PC-9 (cell line): ENCODE measurements at regions of chr3 and their contacts with region 1.

Region 1: DNA sequence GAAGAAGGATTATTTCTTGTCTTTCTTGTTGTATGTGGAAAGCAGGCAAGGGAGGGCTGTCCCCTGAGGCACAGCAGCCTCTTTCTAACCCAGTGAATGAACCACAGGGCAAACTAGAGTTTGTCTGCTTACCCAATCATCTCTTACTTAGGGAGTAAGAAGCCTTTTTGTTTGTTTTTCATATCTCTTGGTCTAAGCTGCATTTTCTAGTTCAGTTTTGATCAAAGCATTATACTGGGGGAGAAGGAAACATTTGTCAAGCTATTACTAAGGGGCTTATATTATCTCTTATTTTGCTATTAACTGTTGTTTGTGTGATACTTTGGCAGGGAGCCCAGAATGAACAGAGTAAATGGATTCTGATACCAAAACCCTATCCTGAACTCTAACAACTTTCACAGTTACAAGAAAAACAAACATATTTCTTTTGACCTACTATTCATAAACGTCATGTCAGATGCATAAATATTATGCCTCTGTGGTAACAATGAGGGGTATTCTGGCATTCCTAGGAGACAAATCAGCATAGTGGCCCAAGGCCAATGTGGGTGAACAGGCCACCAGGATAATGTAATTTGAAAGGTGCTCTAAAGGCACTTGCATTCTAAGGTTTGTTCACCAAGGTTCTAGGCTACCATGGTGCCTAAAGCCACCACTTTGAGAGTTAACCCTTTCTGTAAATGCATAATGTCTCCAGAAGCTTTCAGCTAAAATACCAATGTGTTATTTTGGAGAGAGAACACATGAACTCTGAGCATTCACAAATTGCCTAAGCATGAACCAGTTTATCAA is 271.6 kb upstream of the ZPLD1 start:
- DNase-seq: peak; percentile 84 to 100
- H3K4me3 ChIP-seq: peak overlapping the region; percentile 7; the same call in 1 of the 2 replicates
- H3K27ac ChIP-seq: peak overlapping the region; percentile 87
- H3K4me1 ChIP-seq: peaks cover 59% of the 10 kb centered on the region
- H3K27me3 ChIP-seq: no peaks in the 10 kb centered on the region
- CTCF ChIP-seq: no peak

Region 2: GRCh38 chr3:101849051-101849720 is 314.0 kb before region 1 on chr3 and contains the start of gene NFKBIZ:
- CTCF ChIA-PET with region 1: no interaction called
- POLR2A ChIA-PET with region 1: interaction called, 10 read pairs
- intact Hi-C with region 1: loop called (anchors 1 kb)
- DNase-seq: peak; percentile 91 to 99
- H3K4me3 ChIP-seq: peak within 1 kb of the TSS; percentile 88
- H3K27ac ChIP-seq: peak within 1 kb of the TSS; percentile 80
- H3K4me1 ChIP-seq: peaks cover 24% of the 10 kb centered on the region
- H3K27me3 ChIP-seq: no peaks in the 10 kb centered on the region
- CTCF ChIP-seq: no peak
- total RNA-seq, gene NFKBIZ: 44.9 and 57.7 TPM in 2 replicates

Region 3: DNA sequence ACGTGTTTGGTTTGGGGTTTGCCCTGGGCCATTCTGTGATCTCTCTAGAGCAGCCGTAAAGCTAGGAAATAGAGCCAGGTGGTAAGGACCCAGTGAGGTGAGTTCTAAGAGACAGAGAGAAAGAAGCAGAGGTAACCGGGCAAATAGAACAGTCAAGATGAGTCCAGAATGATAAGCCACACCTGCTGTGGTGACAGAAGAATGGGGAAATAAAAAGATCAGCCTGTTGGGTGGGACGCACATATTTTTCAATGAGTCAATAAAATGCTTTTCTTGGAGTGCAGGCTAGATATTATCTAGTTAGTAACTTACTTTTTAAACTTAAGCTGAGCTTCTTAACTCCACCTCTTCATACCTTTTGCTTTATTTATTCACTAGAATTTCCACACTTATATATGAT is 178.9 kb before region 1 on chr3:
- CTCF ChIA-PET with region 1: no interaction called
- POLR2A ChIA-PET with region 1: no interaction called
- intact Hi-C with region 1: loop called (anchors 1 kb)
- DNase-seq: peak; percentile 67 to 91
- H3K4me3 ChIP-seq: no peak overlapping the region
- H3K27ac ChIP-seq: peak overlapping the region; percentile 1; the same call in 1 of the 2 replicates
- H3K4me1 ChIP-seq: peaks cover 12% of the 10 kb centered on the region
- H3K27me3 ChIP-seq: no peaks in the 10 kb centered on the region
- CTCF ChIP-seq: no peak

Region 4: GRCh38 chr3:102124301-102125158 is 38.7 kb before region 1 on chr3:
- CTCF ChIA-PET with region 1: no interaction called
- POLR2A ChIA-PET with region 1: no interaction called
- intact Hi-C with region 1: loop called (anchors 1 kb)
- DNase-seq: peak in 1 of 2 experiments; percentile 85
- H3K4me3 ChIP-seq: no peak overlapping the region
- H3K27ac ChIP-seq: peak overlapping the region; percentile 53
- H3K4me1 ChIP-seq: peaks cover 17% of the 10 kb centered on the region
- H3K27me3 ChIP-seq: no peaks in the 10 kb centered on the region
- CTCF ChIP-seq: no peak

Region 5: DNA sequence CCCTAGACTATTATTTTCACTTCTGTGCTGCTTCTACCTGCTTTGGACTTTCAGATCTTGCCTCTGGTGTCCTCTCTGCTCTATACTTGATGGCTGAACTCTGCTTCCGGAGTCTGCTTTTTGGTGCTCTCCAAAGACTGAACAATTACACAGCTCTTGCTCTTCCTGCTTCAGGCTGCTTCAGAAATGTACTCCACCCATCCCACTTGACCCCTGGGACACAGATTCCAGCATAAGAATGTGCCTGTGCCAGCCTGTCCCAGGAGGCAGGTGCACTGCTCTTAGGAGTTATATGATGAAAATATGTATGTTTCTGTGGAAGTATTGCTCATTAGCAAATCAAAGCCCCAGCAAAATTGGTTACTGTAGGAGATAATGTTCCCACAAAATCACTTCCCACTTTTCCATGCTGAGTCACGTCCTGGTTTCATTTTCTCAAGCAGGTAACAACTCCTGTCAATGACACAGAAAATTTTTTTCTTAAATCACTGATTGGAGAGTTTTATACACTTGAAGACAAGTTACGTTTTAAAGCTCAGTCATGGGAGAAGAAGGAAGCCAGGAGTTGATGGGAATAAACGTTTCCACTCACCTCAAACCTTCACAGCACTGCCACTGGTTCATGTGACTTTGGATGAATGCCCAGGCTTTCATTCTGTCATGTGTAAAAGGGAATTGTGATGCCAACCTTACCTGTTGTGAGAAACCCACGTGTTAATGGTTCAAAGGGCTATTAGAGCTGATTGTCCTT is 32.1 kb after region 1 on chr3:
- CTCF ChIA-PET with region 1: no interaction called
- POLR2A ChIA-PET with region 1: no interaction called
- intact Hi-C with region 1: loop called (anchors 1 kb)
- DNase-seq: peak; percentile 78 to 79
- H3K4me3 ChIP-seq: peak overlapping the region; percentile 0; the same call in 1 of the 2 replicates
- H3K27ac ChIP-seq: peak overlapping the region; percentile 75
- H3K4me1 ChIP-seq: peaks cover 28% of the 10 kb centered on the region
- H3K27me3 ChIP-seq: no peaks in the 10 kb centered on the region
- CTCF ChIP-seq: no peak

Region 6: GRCh38 chr3:103170651-103171050 is 1007.4 kb after region 1 on chr3:
- CTCF ChIA-PET with region 1: no interaction called
- POLR2A ChIA-PET with region 1: no interaction called
- intact Hi-C with region 1: no loop called
- DNase-seq: no peak
- H3K4me3 ChIP-seq: no peak overlapping the region
- H3K27ac ChIP-seq: no peak overlapping the region
- H3K4me1 ChIP-seq: no peaks in the 10 kb centered on the region
- H3K27me3 ChIP-seq: no peaks in the 10 kb centered on the region
- CTCF ChIP-seq: no peak